AG04450 (cell line): ENCODE measurements at regions of chr15 and their contacts with region 1.

Region 1: GRCh38 chr15:40952901-40953712 is at the start of gene CHAC1:
- DNase-seq: peak; percentile 91
- H3K4me3 ChIP-seq: peak within 1 kb of the TSS; percentile 95
- H3K27ac ChIP-seq: peak within 1 kb of the TSS; percentile 96
- H3K27me3 ChIP-seq: no peaks in the 10 kb centered on the region
- CTCF ChIP-seq: no peak
- polyA plus RNA-seq, gene CHAC1: 106 and 154 TPM in 2 replicates

Region 2: DNA sequence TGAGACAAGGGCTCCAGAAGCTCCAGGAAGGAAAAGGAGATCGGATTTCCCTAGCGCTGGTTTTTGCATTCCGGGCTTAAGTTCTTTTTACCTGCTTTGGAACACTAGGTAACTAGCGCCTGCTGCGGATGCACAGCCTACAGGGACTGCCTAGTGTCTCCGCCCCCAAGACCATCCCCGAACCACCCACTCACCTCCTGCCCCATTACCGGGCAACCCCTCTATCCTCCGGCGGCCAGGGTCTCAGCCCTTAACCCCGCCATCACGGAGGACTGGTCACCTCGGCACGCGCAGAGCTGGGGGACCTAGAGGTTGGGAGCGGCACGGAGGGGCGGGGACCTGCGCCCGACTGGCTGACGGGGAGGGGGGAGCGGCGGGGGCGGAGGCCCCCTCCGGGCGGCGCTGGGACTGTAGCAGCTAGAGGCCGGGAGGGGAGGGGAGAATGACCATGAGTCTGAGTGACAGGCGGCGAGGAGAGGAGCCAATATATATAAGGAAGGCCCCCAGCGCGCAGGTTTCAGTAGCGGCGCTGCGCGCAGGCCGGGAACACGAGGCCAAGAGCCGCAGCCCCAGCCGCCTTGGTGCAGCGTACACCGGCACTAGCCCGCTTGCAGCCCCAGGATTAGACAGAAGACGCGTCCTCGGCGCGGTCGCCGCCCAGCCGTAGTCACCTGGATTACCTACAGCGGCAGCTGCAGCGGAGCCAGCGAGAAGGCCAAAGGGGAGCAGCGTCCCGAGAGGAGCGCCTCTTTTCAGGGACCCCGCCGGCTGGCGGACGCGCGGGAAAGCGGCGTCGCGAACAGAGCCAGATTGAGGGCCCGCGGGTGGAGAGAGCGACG is 24.1 kb before region 1 on chr15 and contains the start of gene DLL4:
- CTCF ChIA-PET with region 1: interaction called, 5 read pairs
- POLR2A ChIA-PET with region 1: interaction called, 14 read pairs
- DNase-seq: peak; percentile 24
- H3K4me3 ChIP-seq: peak within 1 kb of the TSS; percentile 63
- H3K27ac ChIP-seq: no peak within 1 kb of the TSS
- H3K27me3 ChIP-seq: peaks cover 42% of the 10 kb centered on the region
- CTCF ChIP-seq: no peak
- polyA plus RNA-seq, gene DLL4: 1.5 and 2.6 TPM in 2 replicates

Region 3: GRCh38 chr15:40982855-40983254 is 29.7 kb after region 1 on chr15:
- CTCF ChIA-PET with region 1: interaction called, 3 read pairs
- POLR2A ChIA-PET with region 1: interaction called, 12 read pairs
- DNase-seq: peak; percentile 67
- H3K4me3 ChIP-seq: no peak overlapping the region; the same call in 1 of the 2 replicates
- H3K27ac ChIP-seq: peak overlapping the region; percentile 84
- H3K27me3 ChIP-seq: no peaks in the 10 kb centered on the region
- CTCF ChIP-seq: no peak